ENCODE measurements at regions of chr9 and their contacts with region 1.

Region 1: DNA sequence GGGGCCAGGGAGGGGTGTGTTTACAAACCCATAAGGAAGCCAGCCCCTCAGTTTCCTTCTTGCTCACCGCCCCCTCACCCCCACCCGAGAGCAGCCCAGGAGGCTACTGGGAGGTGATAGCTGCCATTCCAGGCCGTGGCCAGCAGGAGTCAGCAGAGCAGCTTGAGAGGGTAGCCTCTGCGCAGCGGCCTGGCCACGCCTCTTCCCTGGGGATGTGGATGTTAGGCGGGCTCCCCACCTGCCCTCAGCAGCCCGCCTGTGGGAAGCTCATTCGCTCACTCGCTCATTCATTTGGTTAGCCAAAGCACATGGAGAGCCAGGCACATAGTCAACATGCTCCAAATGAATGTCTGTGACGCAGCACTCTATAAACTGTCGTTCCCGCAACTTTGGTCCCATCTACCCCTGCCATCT is 6.1 kb upstream of the DPM2 start:
- DNase-seq: peak; percentile 79 to 93
- H3K4me3 ChIP-seq: no peak overlapping the region
- H3K27ac ChIP-seq: no peak overlapping the region
- H3K4me1 ChIP-seq: peaks cover 0 to 16% (median 7%) of the 10 kb centered on the region in 4 experiments; a peak in 6 of 7 replicates
- H3K27me3 ChIP-seq: no peaks in the 10 kb centered on the region
- CTCF ChIP-seq: peak in 2 of 3 experiments; percentile 91 to 94; a peak in 3 of 4 replicates
- EP300 ChIP-seq: no peak
- POLR2A ChIP-seq: no peak
- RAD21 ChIP-seq: peak; percentile 85 to 88

Region 2: DNA sequence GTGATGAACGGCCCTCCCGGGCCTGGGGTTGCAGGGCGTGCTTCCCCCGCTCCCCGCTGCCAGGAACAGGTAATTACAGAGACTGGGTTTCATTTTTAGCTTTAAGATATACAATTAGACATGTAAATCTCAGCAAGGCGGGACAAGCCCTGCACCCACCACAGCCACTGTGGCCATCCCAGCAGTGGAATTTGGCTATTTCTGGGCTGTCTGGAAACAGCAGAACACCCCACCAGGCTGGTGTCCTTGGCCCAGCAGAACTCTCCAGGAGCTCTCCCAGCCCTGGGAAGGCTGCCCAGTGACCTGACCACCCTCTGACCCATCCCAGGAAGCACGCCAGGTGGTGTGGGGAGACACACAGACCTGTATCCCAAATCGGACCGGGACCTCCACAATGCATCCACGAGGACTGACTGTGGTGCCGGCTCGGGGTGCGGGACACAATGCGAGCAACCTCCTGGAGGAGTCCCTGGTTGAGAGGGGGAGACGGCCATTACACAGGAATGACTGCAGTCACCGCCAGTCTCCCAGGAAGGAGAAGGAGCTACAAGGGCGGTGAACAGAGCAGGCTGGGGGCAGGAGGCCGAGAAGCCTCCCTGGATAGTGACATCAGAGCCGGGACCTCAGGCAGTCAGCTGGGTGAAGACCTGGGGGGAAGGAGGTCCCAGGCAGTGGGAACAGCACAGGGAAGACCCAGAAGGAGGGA is 19.8 kb after region 1 on chr9:
- CTCF ChIA-PET with region 1: interaction called, 143 read pairs
- POLR2A ChIA-PET with region 1: no interaction called
- DNase-seq: no peak
- H3K4me3 ChIP-seq: no peak overlapping the region
- H3K27ac ChIP-seq: no peak overlapping the region
- H3K4me1 ChIP-seq: peaks cover 0 to 47% (median 13%) of the 10 kb centered on the region in 4 experiments; a peak in 5 of 7 replicates
- H3K27me3 ChIP-seq: no peaks in the 10 kb centered on the region
- CTCF ChIP-seq: no peak
- EP300 ChIP-seq: no peak
- POLR2A ChIP-seq: no peak
- RAD21 ChIP-seq: no peak

Region 3: DNA sequence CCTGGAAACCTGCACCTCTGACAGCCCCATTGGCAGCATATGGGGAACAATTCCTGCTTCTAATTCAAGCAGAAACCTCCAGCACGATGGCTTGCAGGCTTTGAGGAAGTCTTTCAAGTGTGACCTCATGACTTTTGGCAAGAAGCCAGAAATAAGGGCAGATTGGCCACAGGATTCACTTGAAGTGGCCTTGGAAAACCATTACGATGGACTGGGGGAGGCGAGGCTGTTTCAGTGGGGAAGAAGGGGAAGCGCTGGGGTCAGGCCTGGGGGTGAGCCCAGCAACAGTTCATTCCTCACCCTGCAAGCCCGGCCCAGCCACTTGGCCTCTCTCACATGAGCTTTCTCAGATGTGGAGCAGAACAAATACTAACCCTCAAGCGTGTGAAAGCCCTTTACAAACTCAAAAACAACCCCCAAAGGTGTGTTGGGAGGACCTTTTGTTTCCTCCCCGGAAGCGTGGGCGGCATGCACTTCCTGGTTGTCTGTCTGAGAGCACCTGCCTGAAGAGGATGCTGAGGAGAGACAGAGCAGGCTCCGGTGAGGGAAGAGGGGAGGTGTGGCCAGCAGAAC is 63.9 kb after region 1 on chr9:
- CTCF ChIA-PET with region 1: interaction called, 825 read pairs
- POLR2A ChIA-PET with region 1: no interaction called
- DNase-seq: no peak
- H3K4me3 ChIP-seq: no peak overlapping the region
- H3K27ac ChIP-seq: no peak overlapping the region
- H3K4me1 ChIP-seq: peaks cover 4 to 7% (median 6%) of the 10 kb centered on the region in 4 experiments; a peak in 6 of 7 replicates
- H3K27me3 ChIP-seq: no peaks in the 10 kb centered on the region
- CTCF ChIP-seq: no peak
- EP300 ChIP-seq: no peak
- POLR2A ChIP-seq: no peak
- RAD21 ChIP-seq: no peak

Region 4: DNA sequence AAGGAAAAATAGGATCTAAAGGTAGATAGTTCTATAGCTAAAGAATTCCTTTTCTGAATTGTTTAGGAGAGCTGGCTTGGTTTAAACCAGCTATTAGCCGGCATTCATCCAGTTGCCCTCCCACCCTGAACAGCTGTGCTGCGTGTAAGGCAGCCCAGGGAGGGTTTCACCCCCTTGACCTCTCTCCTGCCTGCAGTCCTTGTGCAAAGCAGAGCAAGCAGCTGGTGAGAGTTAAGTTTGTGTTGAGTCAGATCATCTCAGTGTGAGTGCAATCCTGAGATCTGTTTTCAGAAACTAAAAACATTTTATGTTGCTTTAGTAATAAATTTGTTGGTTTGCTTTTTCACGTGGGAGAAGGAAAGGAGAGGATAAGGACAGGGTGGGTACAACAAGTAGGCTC is 137.3 kb after region 1 on chr9:
- CTCF ChIA-PET with region 1: interaction called, 10 read pairs
- POLR2A ChIA-PET with region 1: interaction called, 5 read pairs
- DNase-seq: no peak
- H3K4me3 ChIP-seq: no peak overlapping the region
- H3K27ac ChIP-seq: no peak overlapping the region
- H3K4me1 ChIP-seq: peaks cover 0 to 5% (median 1%) of the 10 kb centered on the region in 4 experiments; a peak in 3 of 7 replicates
- H3K27me3 ChIP-seq: no peaks in the 10 kb centered on the region
- CTCF ChIP-seq: no peak
- EP300 ChIP-seq: no peak
- POLR2A ChIP-seq: no peak
- RAD21 ChIP-seq: no peak

Region 5: GRCh38 chr9:128094166-128094967 is 150.6 kb after region 1 on chr9:
- CTCF ChIA-PET with region 1: interaction called, 32 read pairs
- POLR2A ChIA-PET with region 1: interaction called, 3 read pairs
- DNase-seq: no peak
- H3K4me3 ChIP-seq: no peak overlapping the region
- H3K27ac ChIP-seq: peak overlapping the region; percentile 46; the same call in 1 of the 2 replicates
- H3K4me1 ChIP-seq: peaks cover 0 to 16% (median 14%) of the 10 kb centered on the region in 4 experiments; a peak in 6 of 7 replicates
- H3K27me3 ChIP-seq: no peaks in the 10 kb centered on the region
- CTCF ChIP-seq: no peak
- EP300 ChIP-seq: no peak
- POLR2A ChIP-seq: no peak
- RAD21 ChIP-seq: no peak